Sigmoid colon (tissue), 7 donors: ENCODE measurements at regions of chrX and their contacts with region 1.

Region 1: DNA sequence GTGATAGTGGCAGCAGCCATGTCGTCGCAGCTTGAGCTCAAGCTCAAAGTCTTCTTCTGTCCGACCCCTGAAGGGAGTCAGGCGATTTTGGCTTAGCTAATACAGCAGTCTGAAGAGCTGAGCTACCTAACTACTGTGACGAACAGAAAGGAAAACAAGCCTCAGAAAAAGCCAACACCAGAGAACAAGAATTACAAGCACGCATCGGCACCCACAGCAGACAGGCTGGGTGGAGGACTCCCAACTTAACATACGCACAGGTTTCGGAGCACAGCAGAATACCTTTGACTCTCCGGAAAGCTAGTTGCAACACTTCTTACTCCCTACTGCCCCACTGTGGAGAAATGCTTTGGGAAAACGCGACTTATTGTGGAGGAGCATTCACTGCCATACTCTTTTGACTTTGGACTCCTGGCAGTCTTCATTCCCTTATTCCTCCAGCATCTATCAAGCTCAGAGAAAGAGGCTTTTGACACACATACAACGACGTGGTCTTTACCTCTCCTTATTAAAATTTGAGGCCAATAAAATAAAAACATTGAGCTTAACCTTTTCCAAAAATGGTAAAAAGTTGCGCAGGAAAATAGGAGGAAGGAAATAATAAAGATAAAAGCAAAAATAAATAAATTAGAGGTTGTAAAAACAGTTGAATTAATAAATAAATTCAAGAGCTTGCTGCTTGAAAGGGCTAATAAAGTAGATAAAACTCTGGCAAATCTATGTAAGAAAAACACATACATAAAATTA is 41.3 kb upstream of the GPC3 start:
- DNase-seq: peak; percentile 64
- H3K4me3 ChIP-seq: peak overlapping the region in 2 of 4 donors; percentile 12 to 13
- H3K27ac ChIP-seq: no peak overlapping the region
- H3K4me1 ChIP-seq: no peaks in the 10 kb centered on the region
- H3K27me3 ChIP-seq: no peaks in the 10 kb centered on the region
- CTCF ChIP-seq: peak in 3 of 4 experiments; percentile 25 to 38 (median 36)
- EP300 ChIP-seq: no peak
- POLR2A ChIP-seq: no peak

Region 2: GRCh38 chrX:133958997-133959688 is 67.6 kb before region 1 on chrX:
- intact Hi-C with region 1: loop called (anchors 10 kb)
- DNase-seq: no peak
- H3K4me3 ChIP-seq: no peak overlapping the region
- H3K27ac ChIP-seq: no peak overlapping the region
- H3K4me1 ChIP-seq: no peaks in the 10 kb centered on the region
- H3K27me3 ChIP-seq: no peaks in the 10 kb centered on the region
- CTCF ChIP-seq: no peak
- EP300 ChIP-seq: no peak
- POLR2A ChIP-seq: no peak

Region 3: DNA sequence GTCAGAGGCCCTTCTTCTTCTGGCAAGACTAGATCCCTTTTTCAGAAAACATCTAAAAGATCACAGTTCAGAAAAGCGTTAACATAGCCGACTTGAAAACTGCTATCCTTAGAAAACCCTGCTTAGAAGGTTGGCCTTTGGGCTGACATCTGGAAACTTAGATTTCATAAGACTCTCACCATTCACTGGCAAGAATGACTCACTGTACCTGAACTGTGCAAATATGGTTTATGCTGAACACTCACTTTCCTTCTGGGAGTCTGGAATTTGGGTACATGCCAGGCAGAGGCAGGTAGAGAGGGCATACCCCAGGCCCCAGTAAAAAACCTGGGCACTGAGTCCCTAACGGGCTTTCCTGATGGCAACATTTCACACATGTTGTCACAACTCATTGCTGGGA is 47.4 kb after region 1 on chrX:
- intact Hi-C with region 1: no loop called
- DNase-seq: no peak
- H3K4me3 ChIP-seq: no peak overlapping the region
- H3K27ac ChIP-seq: no peak overlapping the region
- H3K4me1 ChIP-seq: no peaks in the 10 kb centered on the region
- H3K27me3 ChIP-seq: no peaks in the 10 kb centered on the region
- CTCF ChIP-seq: no peak
- EP300 ChIP-seq: no peak
- POLR2A ChIP-seq: no peak